Activated T-helper 2 cell treated with anti-CD3 and anti-CD28 coated beads, Interferon-gamma antibody, Interleukin-2, Interleukin-4, amounts not matched to agents 10 μg/mL and 5 μg/mL and 100 μg/mL, durations not matched to agents 14 hours and 24 hours and 36 hours (primary cell): ENCODE measurements at regions of chr15 and their contacts with region 1.

Region 1: GRCh38 chr15:80152180-80152845 is 486 bp upstream of the FAH start:
- DNase-seq: peak; percentile 80
- H3K4me3 Mint-ChIP-seq: peak overlapping the region; percentile 95
- H3K27ac Mint-ChIP-seq: peak overlapping the region; percentile 64
- H3K4me1 Mint-ChIP-seq: peaks cover 30% of the 10 kb centered on the region
- H3K27me3 Mint-ChIP-seq: peaks cover 5% of the 10 kb centered on the region

Region 2: GRCh38 chr15:79896637-79897379 is 255.5 kb before region 1 on chr15 and contains the start of gene MTHFS:
- intact Hi-C with region 1: loop called (anchors 10 kb)
- DNase-seq: peak; percentile 77
- H3K4me3 Mint-ChIP-seq: peak within 1 kb of the TSS; percentile 98
- H3K27ac Mint-ChIP-seq: peak within 1 kb of the TSS; percentile 99
- H3K4me1 Mint-ChIP-seq: peaks cover 47% of the 10 kb centered on the region
- H3K27me3 Mint-ChIP-seq: no peaks in the 10 kb centered on the region
- total RNA-seq, gene MTHFS: 33.3 and 34.6 TPM in 2 replicates

Region 3: DNA sequence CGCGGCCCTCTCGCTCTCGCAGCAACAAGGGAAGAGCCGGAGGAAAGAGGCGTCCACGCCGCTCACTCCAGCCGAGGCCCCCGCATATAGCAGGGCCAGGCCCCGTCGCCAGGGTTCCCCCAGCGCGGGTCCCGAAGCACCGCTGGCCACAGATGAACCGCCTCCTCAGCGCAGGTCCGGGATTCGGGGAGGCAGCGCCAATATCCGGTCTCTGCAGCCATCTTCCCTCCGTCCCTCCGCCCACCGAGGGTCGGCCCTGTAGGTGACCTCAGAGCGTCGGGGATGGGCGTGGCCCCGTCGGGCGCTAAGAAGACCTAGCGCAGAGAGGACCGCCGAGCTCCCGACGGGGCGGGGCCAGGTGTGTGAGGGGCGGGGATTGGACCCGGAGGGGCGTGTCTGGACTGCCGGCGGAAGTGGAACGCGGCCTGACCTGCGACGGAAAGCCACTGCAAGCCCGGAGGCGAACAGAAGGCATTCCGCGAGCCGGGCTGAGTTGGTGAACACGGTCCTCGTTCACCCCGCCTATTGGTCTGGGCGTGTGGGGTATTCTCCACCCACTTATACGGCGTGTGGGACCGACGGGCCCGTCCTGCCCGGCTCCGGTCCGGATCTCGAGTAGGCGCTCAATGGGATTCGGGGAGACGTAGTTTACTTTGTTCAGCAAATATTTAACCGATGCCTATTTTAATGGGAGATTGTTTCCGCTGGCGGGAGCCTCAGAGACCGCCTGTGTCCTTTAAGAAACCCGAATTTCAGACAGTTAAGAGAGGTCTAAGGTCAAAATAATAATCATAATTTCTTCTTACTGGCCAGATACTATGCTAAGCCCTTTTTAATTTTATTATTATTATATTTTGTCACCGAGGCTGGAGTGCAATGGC is 228.6 kb before region 1 on chr15:
- intact Hi-C with region 1: loop called (anchors 5 kb)
- DNase-seq: peak; percentile 99
- H3K4me3 Mint-ChIP-seq: peak overlapping the region; percentile 87
- H3K27ac Mint-ChIP-seq: peak overlapping the region; percentile 95
- H3K4me1 Mint-ChIP-seq: peaks cover 15% of the 10 kb centered on the region
- H3K27me3 Mint-ChIP-seq: no peaks in the 10 kb centered on the region

Region 4: GRCh38 chr15:80072285-80072994 is 79.9 kb before region 1 on chr15:
- intact Hi-C with region 1: loop called (anchors 2 kb)
- DNase-seq: no peak
- H3K4me3 Mint-ChIP-seq: peak overlapping the region; percentile 86
- H3K27ac Mint-ChIP-seq: no peak overlapping the region
- H3K4me1 Mint-ChIP-seq: peaks cover 36% of the 10 kb centered on the region
- H3K27me3 Mint-ChIP-seq: no peaks in the 10 kb centered on the region